ENCODE measurements at regions of chr11 and their contacts with region 1.

Region 1: DNA sequence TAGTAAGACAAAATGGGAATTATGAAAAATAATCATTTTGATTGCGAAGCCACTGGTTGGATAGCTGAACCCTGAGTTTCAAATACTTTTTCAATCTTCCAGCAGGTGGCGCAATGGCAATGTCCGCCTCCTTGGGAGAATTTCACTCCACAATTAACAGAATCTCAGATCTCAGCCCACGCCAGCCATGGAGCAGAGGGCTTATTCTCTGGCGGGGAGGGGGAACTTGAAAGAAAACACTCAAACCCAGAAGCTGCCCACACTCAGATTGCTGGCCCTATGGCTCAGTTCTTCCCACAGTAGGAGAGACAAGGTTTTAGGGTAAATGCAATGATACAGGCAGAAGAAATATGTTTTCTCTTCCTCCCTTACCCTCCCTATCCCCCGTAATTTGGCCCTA is 38.7 kb upstream of the RCN1 start:
- DNase-seq: peak; percentile 18
- ATAC-seq: peak; percentile 69
- H3K4me3 ChIP-seq: no peak overlapping the region
- H3K27ac ChIP-seq: no peak overlapping the region
- H3K4me1 ChIP-seq: no peaks in the 10 kb centered on the region
- H3K27me3 ChIP-seq: peaks cover 0 to 31% of the 10 kb centered on the region in 2 experiments; a peak in 2 of 5 replicates
- CTCF ChIP-seq: peak; percentile 79
- EP300 ChIP-seq: no peak
- POLR2A ChIP-seq: no peak
- RAD21 ChIP-seq: no peak; the same call in 1 of the 2 replicates

Region 2: GRCh38 chr11:32090545-32091373 is 38.5 kb after region 1 on chr11 and contains the start of gene RCN1:
- CTCF ChIA-PET with region 1: no interaction called
- POLR2A ChIA-PET with region 1: no interaction called
- in situ Hi-C with region 1: no loop called
- intact Hi-C with region 1: no loop called
- DNase-seq: peak; percentile 13
- ATAC-seq: peak; percentile 94
- H3K4me3 ChIP-seq: peak within 1 kb of the TSS; percentile 58 to 70 (median 62)
- H3K27ac ChIP-seq: no peak within 1 kb of the TSS
- H3K4me1 ChIP-seq: peaks cover 28% of the 10 kb centered on the region
- H3K27me3 ChIP-seq: peaks cover 0 to 40% of the 10 kb centered on the region in 2 experiments; a peak in 4 of 5 replicates
- CTCF ChIP-seq: no peak
- EP300 ChIP-seq: no peak
- POLR2A ChIP-seq: no peak
- RAD21 ChIP-seq: no peak
- total RNA-seq, gene RCN1: 14.7 and 28.5 TPM in 2 replicates

Region 3: GRCh38 chr11:32176223-32176934 is 124.2 kb after region 1 on chr11:
- CTCF ChIA-PET with region 1: interaction called, 102 read pairs
- POLR2A ChIA-PET with region 1: no interaction called
- in situ Hi-C with region 1: loop called (anchors 5 kb)
- intact Hi-C with region 1: loop called (anchors 1 kb)
- DNase-seq: peak; percentile 69
- ATAC-seq: peak; percentile 81
- H3K4me3 ChIP-seq: no peak overlapping the region
- H3K27ac ChIP-seq: no peak overlapping the region
- H3K4me1 ChIP-seq: no peaks in the 10 kb centered on the region
- H3K27me3 ChIP-seq: peaks cover 0 to 19% of the 10 kb centered on the region in 2 experiments; a peak in 4 of 5 replicates
- CTCF ChIP-seq: peak; percentile 84
- EP300 ChIP-seq: no peak
- POLR2A ChIP-seq: no peak
- RAD21 ChIP-seq: peak; percentile 70

Region 4: GRCh38 chr11:32213223-32213622 is 161.0 kb after region 1 on chr11:
- CTCF ChIA-PET with region 1: no interaction called
- POLR2A ChIA-PET with region 1: no interaction called
- in situ Hi-C with region 1: no loop called
- intact Hi-C with region 1: no loop called
- DNase-seq: no peak
- ATAC-seq: no peak
- H3K4me3 ChIP-seq: no peak overlapping the region
- H3K27ac ChIP-seq: no peak overlapping the region
- H3K4me1 ChIP-seq: no peaks in the 10 kb centered on the region
- H3K27me3 ChIP-seq: peaks cover 0 to 5% of the 10 kb centered on the region in 2 experiments; a peak in 2 of 5 replicates
- CTCF ChIP-seq: no peak
- EP300 ChIP-seq: no peak
- POLR2A ChIP-seq: no peak
- RAD21 ChIP-seq: no peak

Measured in HepG2 (cell line).